CD4-positive, alpha-beta T cell (primary cell): ENCODE measurements at regions of chr10 and their contacts with region 1.

Region 1: GRCh38 chr10:101353692-101354327 is at the start of gene BTRC:
- DNase-seq: peak; percentile 87 to 99 (median 92)
- ATAC-seq: peak; percentile 94
- H3K4me3 ChIP-seq: peak within 1 kb of the TSS; percentile 79
- H3K4me3 Mint-ChIP-seq: peak within 1 kb of the TSS; percentile 100
- H3K27ac ChIP-seq: peak within 1 kb of the TSS; percentile 26 to 86
- H3K27ac Mint-ChIP-seq: peak within 1 kb of the TSS; percentile 94
- H3K4me1 ChIP-seq: peaks cover 17% of the 10 kb centered on the region
- H3K4me1 Mint-ChIP-seq: peaks cover 39% of the 10 kb centered on the region
- H3K27me3 ChIP-seq: peaks cover 0 to 5% of the 10 kb centered on the region in 2 experiments
- H3K27me3 Mint-ChIP-seq: peaks cover 17% of the 10 kb centered on the region
- CTCF ChIP-seq: no peak
- total RNA-seq, gene BTRC: 13.1 to 13.2 TPM

Region 2: DNA sequence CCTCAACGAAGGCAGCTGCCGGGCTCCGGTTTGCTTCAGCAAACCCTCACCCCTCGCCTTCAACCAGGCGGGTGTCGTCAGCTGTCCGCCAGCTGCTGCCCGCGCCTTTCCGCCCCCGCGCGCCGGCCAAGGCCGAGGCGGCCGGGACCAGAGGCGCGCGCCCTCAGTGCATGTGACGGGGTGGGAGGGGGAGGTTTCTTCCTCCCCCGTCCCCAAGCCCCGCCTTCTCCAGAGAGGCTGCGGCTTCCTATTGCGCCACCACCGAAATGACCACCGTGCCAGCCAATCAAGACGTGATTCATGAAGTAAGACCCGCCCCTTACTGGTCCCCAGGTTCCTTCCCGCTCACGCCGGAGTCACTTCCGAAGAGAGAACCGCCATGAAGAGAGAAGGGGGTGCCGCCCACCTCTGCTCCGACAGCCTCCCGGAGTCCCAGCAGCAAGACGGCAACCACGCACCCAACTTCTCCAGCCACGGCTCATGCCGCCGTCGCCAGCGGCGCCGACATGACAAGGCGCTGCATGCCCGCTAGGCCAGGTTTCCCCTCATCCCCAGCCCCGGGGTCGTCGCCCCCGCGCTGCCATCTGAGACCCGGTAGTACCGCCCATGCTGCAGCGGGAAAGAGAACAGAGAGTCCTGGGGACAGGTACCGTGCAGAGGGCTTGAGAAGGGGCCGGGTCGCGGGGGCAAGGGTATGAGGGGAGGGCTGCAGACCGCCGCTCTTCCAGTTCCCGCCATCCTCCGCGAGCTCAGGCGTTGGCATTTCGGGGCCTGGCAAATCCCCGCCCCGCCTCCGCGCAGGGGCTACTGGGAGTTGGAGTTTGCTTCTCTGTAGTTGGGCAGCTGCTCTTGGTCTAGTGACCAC is 441.0 kb before region 1 on chr10 and contains the start of gene SLF2:
- CTCF ChIA-PET with region 1: no interaction called
- POLR2A ChIA-PET with region 1: no interaction called
- intact Hi-C with region 1: loop called in 1 of 2 experiments (anchors 5 kb)
- DNase-seq: peak; percentile 71 to 97 (median 90)
- ATAC-seq: peak; percentile 80
- H3K4me3 ChIP-seq: peak within 1 kb of the TSS; percentile 71
- H3K4me3 Mint-ChIP-seq: peak within 1 kb of the TSS; percentile 98
- H3K27ac ChIP-seq: peak within 1 kb of the TSS; percentile 78 to 80
- H3K27ac Mint-ChIP-seq: peak within 1 kb of the TSS; percentile 94
- H3K4me1 ChIP-seq: peaks cover 15% of the 10 kb centered on the region
- H3K4me1 Mint-ChIP-seq: peaks cover 60% of the 10 kb centered on the region
- H3K27me3 ChIP-seq: no peaks in the 10 kb centered on the region
- H3K27me3 Mint-ChIP-seq: no peaks in the 10 kb centered on the region
- CTCF ChIP-seq: no peak
- total RNA-seq, gene SLF2: 11.1 TPM

Region 3: GRCh38 chr10:101587725-101588653 is 234.2 kb after region 1 on chr10 and contains the starts of genes DPCD and POLL:
- CTCF ChIA-PET with region 1: no interaction called
- POLR2A ChIA-PET with region 1: interaction called, 3 read pairs
- intact Hi-C with region 1: loop called in 1 of 2 experiments (anchors 10 kb)
- DNase-seq: peak; percentile 80 to 94 (median 88)
- ATAC-seq: peak; percentile 90
- H3K4me3 ChIP-seq: peak within 1 kb of the TSS; percentile 72
- H3K4me3 Mint-ChIP-seq: peak within 1 kb of the TSS; percentile 97
- H3K27ac ChIP-seq: peak within 1 kb of the TSS in 1 of 2 donors; percentile 59
- H3K27ac Mint-ChIP-seq: peak within 1 kb of the TSS; percentile 79
- H3K4me1 ChIP-seq: peaks cover 24% of the 10 kb centered on the region
- H3K4me1 Mint-ChIP-seq: peaks cover 24% of the 10 kb centered on the region
- H3K27me3 ChIP-seq: no peaks in the 10 kb centered on the region
- H3K27me3 Mint-ChIP-seq: peaks cover 6% of the 10 kb centered on the region
- CTCF ChIP-seq: no peak
- total RNA-seq, gene DPCD: 0.31 to 0.96 TPM
- total RNA-seq, gene POLL: 23.3 to 24.3 TPM

Region 4: GRCh38 chr10:102132563-102133372 is 779.0 kb after region 1 on chr10 and contains the start of gene PPRC1:
- CTCF ChIA-PET with region 1: no interaction called
- POLR2A ChIA-PET with region 1: no interaction called
- intact Hi-C with region 1: loop called in 1 of 2 experiments (anchors 5 kb)
- DNase-seq: peak; percentile 93 to 99 (median 95)
- ATAC-seq: peak; percentile 94
- H3K4me3 ChIP-seq: peak within 1 kb of the TSS; percentile 98
- H3K4me3 Mint-ChIP-seq: peak within 1 kb of the TSS; percentile 98
- H3K27ac ChIP-seq: peak within 1 kb of the TSS; percentile 81 to 82
- H3K27ac Mint-ChIP-seq: peak within 1 kb of the TSS; percentile 87
- H3K4me1 ChIP-seq: peaks cover 40% of the 10 kb centered on the region
- H3K4me1 Mint-ChIP-seq: peaks cover 39% of the 10 kb centered on the region
- H3K27me3 ChIP-seq: no peaks in the 10 kb centered on the region
- H3K27me3 Mint-ChIP-seq: no peaks in the 10 kb centered on the region
- CTCF ChIP-seq: peak; percentile 96
- total RNA-seq, gene PPRC1: 22.0 to 22.9 TPM

Region 5: GRCh38 chr10:102713814-102714620 is 1360.2 kb after region 1 on chr10 and contains the start of gene ARL3:
- CTCF ChIA-PET with region 1: no interaction called
- POLR2A ChIA-PET with region 1: no interaction called
- intact Hi-C with region 1: loop called in 1 of 2 experiments (anchors 10 kb)
- DNase-seq: peak; percentile 82 to 98 (median 92)
- ATAC-seq: peak; percentile 89
- H3K4me3 ChIP-seq: peak within 1 kb of the TSS; percentile 98
- H3K4me3 Mint-ChIP-seq: peak within 1 kb of the TSS; percentile 93
- H3K27ac ChIP-seq: peak within 1 kb of the TSS; percentile 84 to 86
- H3K27ac Mint-ChIP-seq: peak within 1 kb of the TSS; percentile 81
- H3K4me1 ChIP-seq: peaks cover 34% of the 10 kb centered on the region
- H3K4me1 Mint-ChIP-seq: peaks cover 61% of the 10 kb centered on the region
- H3K27me3 ChIP-seq: no peaks in the 10 kb centered on the region
- H3K27me3 Mint-ChIP-seq: no peaks in the 10 kb centered on the region
- CTCF ChIP-seq: peak; percentile 46
- total RNA-seq, gene ARL3: 0.99 to 1.3 TPM